Dendritic cell treated with granulocyte-macrophage colony-stimulating factor and Interleukin-4, amounts not matched to agents 40 ng/mL and 50 ng/mL, for 4 days (primary cell): ENCODE measurements at regions of chr16 and their contacts with region 1.

Region 1: DNA sequence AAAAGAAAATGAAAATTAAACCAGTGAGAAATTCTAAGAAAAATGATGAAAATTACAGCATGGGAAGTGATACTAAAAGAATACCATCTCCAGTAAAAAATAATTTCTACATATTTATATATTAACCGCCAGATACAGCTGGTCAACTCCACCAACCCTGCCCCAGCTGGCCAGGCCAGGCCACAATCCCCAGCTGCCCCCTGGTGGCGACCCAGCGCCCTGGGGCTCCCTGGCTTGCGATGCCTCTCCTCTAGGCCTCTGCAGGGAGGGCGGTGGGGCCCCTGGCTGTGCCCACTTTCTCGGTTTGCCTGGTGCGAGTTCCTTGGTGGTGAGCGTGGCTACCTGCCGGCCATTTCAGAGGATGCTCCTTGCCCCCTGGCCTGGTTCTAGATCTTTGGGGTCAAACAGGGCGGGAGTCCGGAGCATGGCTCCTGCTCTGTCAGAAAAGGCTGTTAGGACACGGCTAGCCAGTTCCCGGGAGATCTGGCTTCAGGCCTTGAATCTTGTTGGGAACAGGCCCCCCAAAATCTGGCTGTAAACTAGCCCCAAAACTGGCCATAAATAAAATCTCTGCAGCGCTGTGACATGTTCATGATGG is 14.5 kb downstream of the GLIS2 start:
- H3K4me3 Mint-ChIP-seq: no peak overlapping the region
- H3K27ac Mint-ChIP-seq: no peak overlapping the region
- H3K4me1 Mint-ChIP-seq: peaks cover 28% of the 10 kb centered on the region
- H3K27me3 Mint-ChIP-seq: peaks cover 21% of the 10 kb centered on the region

Region 2: DNA sequence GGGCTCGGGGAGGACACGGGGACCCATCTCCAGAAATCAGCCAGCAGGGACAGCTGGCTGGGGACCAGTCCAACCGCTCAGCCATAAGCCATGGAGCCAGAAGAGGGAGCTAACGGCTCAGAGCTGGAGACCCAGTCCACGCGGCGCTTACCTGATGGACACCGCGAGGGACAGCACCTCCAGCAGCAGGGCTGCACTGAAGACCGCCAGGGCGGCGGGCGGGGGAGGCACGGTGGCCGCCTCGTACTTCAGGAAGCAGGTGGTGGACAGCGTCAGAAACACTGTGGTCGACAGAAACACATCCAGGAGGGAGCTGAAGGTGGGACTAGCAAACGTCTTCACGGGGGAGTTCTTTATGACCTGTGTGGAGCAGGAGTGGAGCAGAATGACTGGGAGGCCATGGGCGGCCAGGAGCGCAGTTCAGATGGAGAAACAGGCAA is 347.3 kb before region 1 on chr16:
- intact Hi-C with region 1: loop called (anchors 10 kb)
- H3K4me3 Mint-ChIP-seq: peak overlapping the region; percentile 21
- H3K27ac Mint-ChIP-seq: peak overlapping the region; percentile 2
- H3K4me1 Mint-ChIP-seq: peaks cover 16% of the 10 kb centered on the region
- H3K27me3 Mint-ChIP-seq: peaks cover 6% of the 10 kb centered on the region

Region 3: DNA sequence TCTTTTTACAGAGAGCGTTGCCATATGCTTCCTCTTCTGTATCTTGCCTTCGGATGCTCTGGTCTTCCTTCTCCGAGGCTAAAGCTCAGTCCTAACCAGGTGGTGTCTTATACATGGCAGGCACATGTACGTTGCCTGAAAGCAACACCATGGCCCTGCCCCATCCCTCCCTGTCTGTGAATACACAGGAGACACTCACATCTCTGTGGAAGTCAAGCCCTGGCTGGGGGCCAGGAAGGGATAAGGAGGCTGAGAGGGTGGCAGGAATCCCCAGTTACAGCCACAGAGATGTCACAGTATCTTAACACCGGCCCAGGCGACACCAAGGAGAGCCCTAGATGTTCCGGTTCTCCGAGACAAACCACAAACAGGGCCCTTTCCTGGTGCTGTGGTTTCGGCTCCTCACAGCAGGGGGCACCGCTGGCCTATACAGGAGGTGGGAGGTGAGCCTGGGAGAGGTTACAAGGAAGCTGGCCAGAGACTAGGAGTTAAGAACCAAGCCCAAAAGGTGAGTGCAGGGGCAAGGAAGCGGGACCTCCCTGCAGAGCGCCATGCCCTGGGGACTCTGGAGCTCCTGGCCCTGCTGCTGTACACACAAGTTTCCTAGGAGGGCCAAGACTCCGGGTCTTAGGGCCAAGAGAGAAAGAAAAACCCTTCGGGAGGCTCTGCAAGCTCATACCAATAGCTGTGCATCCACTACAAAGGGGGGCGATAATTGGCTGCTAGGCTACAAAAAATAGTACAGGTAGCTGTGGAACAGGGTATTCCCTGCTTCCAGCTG is 130.2 kb before region 1 on chr16:
- intact Hi-C with region 1: loop called (anchors 2 kb)
- H3K4me3 Mint-ChIP-seq: no peak overlapping the region
- H3K27ac Mint-ChIP-seq: no peak overlapping the region
- H3K4me1 Mint-ChIP-seq: peaks cover 22% of the 10 kb centered on the region
- H3K27me3 Mint-ChIP-seq: peaks cover 28% of the 10 kb centered on the region

Region 4: DNA sequence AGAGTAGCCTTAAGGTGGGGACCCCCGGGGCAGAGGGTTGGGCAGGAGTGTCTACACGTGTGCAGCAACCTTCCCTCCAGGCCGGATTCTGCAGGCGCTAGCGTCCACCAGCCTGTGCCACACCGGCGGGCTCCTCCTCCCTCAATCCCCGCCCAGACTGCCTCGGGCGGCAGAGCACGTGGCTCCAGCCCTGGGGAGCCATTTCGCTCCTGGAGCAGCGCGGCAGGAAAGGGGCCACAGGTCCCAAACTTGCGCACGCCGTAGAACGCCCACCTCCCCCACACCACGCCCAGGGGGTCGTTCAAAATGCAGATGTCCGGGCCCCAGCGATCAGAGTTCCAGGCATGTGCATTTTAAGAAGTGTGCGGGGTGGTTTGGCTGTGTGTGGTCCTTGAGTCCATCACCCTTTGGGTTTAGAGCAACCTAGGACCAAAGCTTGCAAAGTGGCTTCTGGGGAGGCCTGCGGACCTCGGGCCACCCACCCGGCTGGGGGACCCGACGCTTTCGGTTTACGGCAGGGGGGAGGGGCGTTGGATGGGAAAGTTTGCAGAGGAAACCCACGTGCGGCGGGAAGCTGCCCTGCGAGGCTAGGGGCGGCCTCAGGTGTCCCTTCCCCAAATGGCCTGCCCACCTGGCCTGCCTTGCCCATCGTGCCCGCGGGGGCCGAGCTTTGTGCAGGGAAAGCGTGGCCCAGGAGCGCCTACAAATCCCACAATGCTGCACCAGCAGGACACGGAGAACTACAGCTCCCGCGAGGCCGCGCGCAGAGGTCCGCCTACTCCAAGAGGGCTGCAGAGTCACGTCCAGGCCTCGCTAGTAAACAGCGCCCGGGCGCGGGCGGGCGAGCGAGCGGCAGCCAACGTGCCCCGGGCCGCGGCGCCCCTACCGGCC is 59.0 kb before region 1 on chr16:
- intact Hi-C with region 1: loop called (anchors 5 kb)
- H3K4me3 Mint-ChIP-seq: peak overlapping the region; percentile 88
- H3K27ac Mint-ChIP-seq: peak overlapping the region; percentile 91
- H3K4me1 Mint-ChIP-seq: peaks cover 18% of the 10 kb centered on the region
- H3K27me3 Mint-ChIP-seq: peaks cover 4% of the 10 kb centered on the region

Region 5: DNA sequence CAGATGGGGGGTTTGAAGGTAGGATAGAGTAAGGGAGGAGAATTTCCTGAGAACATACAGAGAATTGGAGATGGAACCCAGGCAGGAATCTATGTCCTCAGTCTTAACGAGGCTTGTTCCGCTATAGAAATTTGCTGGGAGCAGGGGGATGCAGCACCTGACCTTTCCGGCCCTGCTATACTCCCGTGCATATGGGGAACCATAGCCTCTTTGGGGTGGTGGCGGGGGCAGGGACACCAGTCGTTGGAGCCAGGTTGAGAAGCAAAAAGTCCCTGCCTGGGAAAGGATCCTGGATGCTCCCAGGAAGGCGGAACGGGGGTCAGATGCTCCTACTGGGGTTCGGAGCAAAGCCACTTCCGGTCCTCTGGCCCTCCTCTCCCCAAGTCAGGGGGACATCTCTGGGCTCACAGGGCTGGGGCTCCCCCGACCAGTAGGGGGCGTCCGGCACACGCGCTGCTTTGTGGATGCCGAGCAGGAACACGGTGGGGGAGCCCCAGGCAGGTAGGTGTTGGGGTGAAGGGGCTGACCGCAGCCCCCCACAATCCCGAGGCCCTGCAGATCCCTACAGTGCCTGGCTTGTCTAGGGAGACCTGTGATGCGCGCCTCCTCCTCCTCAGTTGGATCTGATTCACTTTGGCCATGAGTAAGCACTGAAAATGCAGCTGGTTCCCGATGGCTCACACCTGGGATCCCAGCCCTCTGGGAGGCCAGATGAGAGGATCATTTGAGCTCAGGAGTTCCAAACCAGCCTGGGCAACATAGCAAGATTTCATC is 42.0 kb before region 1 on chr16:
- intact Hi-C with region 1: loop called (anchors 1 kb)
- H3K4me3 Mint-ChIP-seq: no peak overlapping the region
- H3K27ac Mint-ChIP-seq: no peak overlapping the region
- H3K4me1 Mint-ChIP-seq: peaks cover 30% of the 10 kb centered on the region
- H3K27me3 Mint-ChIP-seq: peaks cover 40% of the 10 kb centered on the region

Region 6: DNA sequence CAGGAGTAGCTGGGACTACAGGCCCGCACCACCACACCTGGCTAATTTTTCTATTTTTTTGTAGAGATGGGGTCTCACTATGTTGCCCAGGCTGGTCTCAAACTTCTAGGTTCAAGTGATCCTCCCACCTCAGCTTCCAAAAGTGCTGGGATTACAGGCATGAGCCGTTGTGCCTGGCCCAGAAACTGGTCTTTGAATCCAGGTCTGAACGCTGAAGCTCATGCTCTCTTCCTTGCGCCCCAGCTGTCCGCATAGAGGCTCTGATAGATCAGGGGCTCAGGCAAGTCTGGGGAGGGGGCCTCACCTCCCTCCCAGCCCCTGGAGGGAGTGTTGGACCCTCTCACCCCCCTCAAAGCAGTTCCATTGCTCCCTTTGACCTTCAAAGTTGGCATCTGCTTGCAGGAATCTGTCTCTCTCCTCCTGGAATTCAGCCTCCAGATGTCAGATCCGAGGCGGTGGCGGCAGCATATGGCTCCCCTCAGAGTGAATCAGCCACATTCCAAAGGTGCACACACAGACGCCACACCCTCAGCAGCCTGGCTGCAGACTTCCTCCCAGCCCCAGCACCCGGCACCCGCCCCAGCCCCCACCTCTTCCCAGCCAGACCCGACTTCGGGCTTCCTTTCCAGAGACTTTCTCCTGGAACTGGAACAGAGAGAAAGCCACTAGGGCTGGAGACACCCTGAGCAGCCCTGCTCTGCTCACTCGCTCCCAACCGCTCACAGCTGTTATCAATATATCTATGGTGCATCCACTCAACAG is 31.4 kb before region 1 on chr16:
- intact Hi-C with region 1: no loop called
- H3K4me3 Mint-ChIP-seq: no peak overlapping the region
- H3K27ac Mint-ChIP-seq: peak overlapping the region; percentile 79
- H3K4me1 Mint-ChIP-seq: peaks cover 19% of the 10 kb centered on the region
- H3K27me3 Mint-ChIP-seq: peaks cover 17% of the 10 kb centered on the region

Region 7: DNA sequence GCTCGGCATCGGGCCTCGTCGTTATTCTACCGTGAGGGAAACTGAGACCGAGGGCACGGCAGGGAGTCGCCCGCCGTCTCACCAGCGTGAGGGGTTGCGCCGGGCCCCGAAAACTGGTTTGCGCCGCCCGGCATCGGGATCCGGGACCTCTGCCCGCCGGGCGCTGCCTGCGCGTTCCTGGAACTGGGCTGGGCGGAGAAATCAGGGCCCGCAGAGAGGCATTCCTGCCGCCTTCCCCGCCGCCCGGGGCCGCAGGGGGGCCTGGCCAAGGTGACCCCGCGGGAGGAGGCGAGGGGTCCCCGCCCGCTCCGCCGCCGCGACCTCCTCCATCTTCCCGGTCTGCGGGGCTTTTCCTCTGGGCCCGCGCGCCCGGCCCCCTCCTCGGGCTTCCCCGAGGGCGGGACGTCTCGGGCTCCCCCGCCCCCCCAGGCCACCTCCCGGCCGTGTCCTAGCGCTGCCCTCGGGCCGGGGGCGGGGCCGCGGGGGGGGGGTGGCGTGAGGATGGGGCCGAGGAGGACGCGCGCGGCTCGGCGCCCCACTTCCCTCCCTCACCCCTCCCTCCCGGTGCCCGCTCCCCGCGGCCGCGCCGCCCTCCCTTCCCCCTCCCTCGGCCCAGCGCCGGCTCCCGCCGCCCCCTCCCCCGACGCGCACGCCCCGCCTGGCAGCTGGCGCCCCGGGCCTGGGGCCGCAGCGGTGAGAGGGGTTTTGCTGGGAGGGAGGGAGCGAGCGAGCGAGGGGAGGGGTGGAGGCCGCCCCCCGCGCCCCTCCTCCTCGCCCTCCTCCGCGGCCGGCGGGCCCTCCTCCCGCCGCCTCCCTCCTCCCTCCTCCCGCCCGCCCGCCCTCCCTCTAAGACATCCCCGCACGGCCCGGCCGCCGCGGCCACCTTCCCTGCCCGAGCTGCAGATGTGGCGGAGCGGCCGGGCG is 14.9 kb before region 1 on chr16 and contains the start of gene GLIS2:
- intact Hi-C with region 1: no loop called
- H3K4me3 Mint-ChIP-seq: peak within 1 kb of the TSS; percentile 76
- H3K27ac Mint-ChIP-seq: peak within 1 kb of the TSS; percentile 65
- H3K4me1 Mint-ChIP-seq: peaks cover 32% of the 10 kb centered on the region
- H3K27me3 Mint-ChIP-seq: peaks cover 71% of the 10 kb centered on the region